ENCODE measurements at regions of chr7 and their contacts with region 1.

Region 1: DNA sequence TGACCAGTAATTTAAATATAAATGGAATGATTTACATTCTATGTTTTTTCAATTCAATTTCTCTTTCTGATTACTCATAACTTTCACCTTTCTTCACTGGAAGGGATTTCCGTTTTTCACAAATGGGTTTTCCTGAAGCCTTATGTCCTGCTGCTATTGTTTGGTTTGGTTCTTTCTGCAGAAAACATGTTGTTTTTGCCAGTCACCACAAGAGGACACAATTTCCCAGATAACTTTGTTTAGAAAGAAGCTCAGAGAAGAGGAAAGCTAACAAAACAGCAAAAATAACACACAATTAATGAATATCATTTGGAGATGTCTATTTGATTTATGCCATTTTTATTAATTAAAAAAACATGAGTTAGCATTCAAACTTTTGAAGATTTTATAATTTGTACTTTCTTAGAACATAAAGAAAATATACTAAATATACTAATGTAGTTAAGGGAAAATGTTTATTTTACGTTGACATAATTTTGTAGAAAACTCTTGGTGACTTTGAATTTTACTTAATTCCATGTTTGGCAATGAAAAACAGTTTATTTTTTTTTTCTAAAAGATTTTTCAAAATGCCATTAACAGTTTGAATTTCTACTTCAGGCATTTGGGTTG is 4.6 kb upstream of the TWIST1 start:
- DNase-seq: no peak
- ATAC-seq: no peak
- H3K4me3 Mint-ChIP-seq: no peak overlapping the region
- H3K27ac Mint-ChIP-seq: no peak overlapping the region
- H3K4me1 Mint-ChIP-seq: peaks cover 38% of the 10 kb centered on the region
- H3K27me3 Mint-ChIP-seq: peaks cover 54% of the 10 kb centered on the region
- CTCF ChIP-seq: peak; percentile 50; the same call in 1 of the 2 replicates

Region 2: DNA sequence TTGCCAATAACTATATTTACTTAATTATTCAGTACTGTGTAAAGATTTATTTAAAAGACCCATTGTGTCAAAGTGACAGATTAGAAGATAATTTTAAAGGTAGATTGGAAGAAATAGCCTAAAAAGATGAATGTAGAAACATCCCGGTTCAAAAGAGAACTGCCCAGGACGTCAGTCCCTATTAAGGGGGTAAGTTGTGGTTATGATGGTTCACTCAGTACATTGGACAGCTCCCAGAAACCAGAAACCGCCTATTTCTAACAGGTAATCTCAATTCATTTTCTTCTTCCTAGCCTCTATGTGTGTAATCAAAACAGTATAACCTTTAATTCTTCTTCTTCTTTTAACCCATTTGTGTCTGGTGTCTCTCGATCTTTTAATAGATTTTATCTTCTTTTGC is 24.6 kb after region 1 on chr7:
- CTCF ChIA-PET with region 1: interaction called, 12 read pairs
- POLR2A ChIA-PET with region 1: interaction called, 3 read pairs
- DNase-seq: no peak
- ATAC-seq: no peak
- H3K4me3 Mint-ChIP-seq: no peak overlapping the region
- H3K27ac Mint-ChIP-seq: no peak overlapping the region
- H3K4me1 Mint-ChIP-seq: peaks cover 44% of the 10 kb centered on the region
- H3K27me3 Mint-ChIP-seq: peaks cover 78% of the 10 kb centered on the region
- CTCF ChIP-seq: no peak

Region 3: GRCh38 chr7:19491821-19492452 is 369.9 kb after region 1 on chr7:
- CTCF ChIA-PET with region 1: interaction called, 22 read pairs
- POLR2A ChIA-PET with region 1: no interaction called
- DNase-seq: no peak
- ATAC-seq: peak; percentile 57; the same call in 1 of the 2 replicates
- H3K4me3 Mint-ChIP-seq: no peak overlapping the region
- H3K27ac Mint-ChIP-seq: no peak overlapping the region
- H3K4me1 Mint-ChIP-seq: no peaks in the 10 kb centered on the region
- H3K27me3 Mint-ChIP-seq: peaks cover 1% of the 10 kb centered on the region; the same call in 1 of the 2 replicates
- CTCF ChIP-seq: no peak

Measured in WTC11 (cell line).